B cell (primary cell): ENCODE measurements at regions of chr1 and their contacts with region 1.

Region 1: DNA sequence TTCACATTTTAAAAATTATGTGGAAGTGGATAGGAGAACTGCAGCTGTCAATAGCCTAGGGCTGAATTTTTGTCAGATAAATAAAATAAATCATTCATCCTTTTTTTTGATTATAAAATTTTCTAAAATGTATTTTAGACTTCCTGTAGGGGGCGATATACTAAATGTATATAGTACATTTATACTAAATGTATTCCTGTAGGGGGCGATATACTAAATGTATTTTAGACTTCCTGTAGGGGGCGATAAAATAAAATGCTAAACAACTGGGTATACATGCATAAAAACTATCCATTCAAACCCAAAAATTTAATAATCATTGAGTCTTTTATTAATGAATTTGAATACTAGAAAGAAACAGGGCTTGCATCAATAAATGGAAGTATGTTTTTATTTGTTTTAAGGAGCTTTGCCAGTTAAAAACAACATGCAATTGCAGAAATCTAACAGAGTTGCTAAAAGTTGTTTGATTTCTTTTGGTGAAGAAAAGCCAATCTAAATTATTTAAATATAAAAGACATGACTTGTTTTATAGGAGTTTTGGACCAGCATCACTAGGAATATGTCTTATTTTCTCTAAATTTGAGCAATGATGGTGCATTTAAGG is 31.4 kb downstream of the CLCA1 start:
- DNase-seq: peak; percentile 58
- ATAC-seq: peak; percentile 82
- H3K4me3 ChIP-seq: no peak overlapping the region
- H3K4me3 Mint-ChIP-seq: no peak overlapping the region
- H3K27ac ChIP-seq: no peak overlapping the region
- H3K27ac Mint-ChIP-seq: no peak overlapping the region
- H3K4me1 ChIP-seq: peaks cover 0 to 21% of the 10 kb centered on the region in 2 donors
- H3K4me1 Mint-ChIP-seq: peaks cover 8% of the 10 kb centered on the region
- H3K27me3 ChIP-seq: peaks cover 0 to 11% (median 4%) of the 10 kb centered on the region in 4 experiments
- H3K27me3 Mint-ChIP-seq: peaks cover 36% of the 10 kb centered on the region
- CTCF ChIP-seq: peak; percentile 100

Region 2: GRCh38 chr1:86289161-86289560 is 210.9 kb before region 1 on chr1:
- CTCF ChIA-PET with region 1: no interaction called
- POLR2A ChIA-PET with region 1: no interaction called
- intact Hi-C with region 1: no loop called
- DNase-seq: no peak
- ATAC-seq: no peak
- H3K4me3 ChIP-seq: no peak overlapping the region
- H3K4me3 Mint-ChIP-seq: no peak overlapping the region
- H3K27ac ChIP-seq: no peak overlapping the region
- H3K27ac Mint-ChIP-seq: no peak overlapping the region
- H3K4me1 ChIP-seq: no peaks in the 10 kb centered on the region
- H3K4me1 Mint-ChIP-seq: no peaks in the 10 kb centered on the region
- H3K27me3 ChIP-seq: no peaks in the 10 kb centered on the region
- H3K27me3 Mint-ChIP-seq: no peaks in the 10 kb centered on the region
- CTCF ChIP-seq: no peak

Region 3: DNA sequence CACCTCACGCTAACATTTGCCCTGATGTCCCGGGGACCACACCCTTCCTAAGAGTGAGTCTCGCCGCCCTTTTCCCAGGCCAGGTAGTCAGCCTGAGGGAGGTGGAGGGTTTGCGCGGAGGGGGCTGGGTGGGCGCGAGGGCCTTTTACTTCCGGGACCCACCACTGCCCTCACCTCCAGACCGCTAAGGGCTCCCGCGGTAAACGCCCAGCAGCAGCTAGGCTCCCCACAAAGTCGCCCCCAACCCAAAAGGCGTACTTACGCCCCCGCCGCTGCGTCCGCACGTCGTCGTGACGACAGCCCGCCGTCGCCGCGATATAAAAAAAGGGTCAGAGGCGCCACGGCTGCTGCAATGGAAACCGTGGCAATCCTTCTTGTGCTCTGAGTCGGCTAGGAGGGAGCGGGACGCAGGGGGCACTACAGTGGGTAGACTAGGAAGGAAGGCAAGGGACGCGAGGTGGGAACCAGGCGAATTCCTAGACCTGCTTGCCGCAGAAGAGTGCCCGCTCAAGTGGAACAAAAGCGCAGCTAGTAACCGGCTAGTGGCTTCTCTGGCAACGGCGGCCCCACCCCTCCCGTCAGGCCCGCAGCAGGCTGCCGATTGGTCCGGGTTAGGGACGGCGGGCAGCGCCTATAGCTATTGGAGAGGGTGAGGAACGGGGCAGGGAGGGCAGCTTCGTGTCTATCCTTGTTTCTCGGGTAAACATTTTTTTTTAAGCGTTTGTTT is 104.2 kb before region 1 on chr1 and contains the start of gene ODF2L:
- CTCF ChIA-PET with region 1: interaction called, 12 read pairs
- POLR2A ChIA-PET with region 1: no interaction called
- intact Hi-C with region 1: no loop called
- DNase-seq: peak; percentile 90
- ATAC-seq: peak; percentile 99
- H3K4me3 ChIP-seq: peak within 1 kb of the TSS; percentile 83 to 98 (median 87)
- H3K4me3 Mint-ChIP-seq: peak within 1 kb of the TSS; percentile 99
- H3K27ac ChIP-seq: peak within 1 kb of the TSS; percentile 82 to 90
- H3K27ac Mint-ChIP-seq: peak within 1 kb of the TSS; percentile 97
- H3K4me1 ChIP-seq: peaks cover 12 to 15% of the 10 kb centered on the region in 2 donors
- H3K4me1 Mint-ChIP-seq: peaks cover 36% of the 10 kb centered on the region
- H3K27me3 ChIP-seq: no peaks in the 10 kb centered on the region
- H3K27me3 Mint-ChIP-seq: no peaks in the 10 kb centered on the region
- CTCF ChIP-seq: no peak
- total RNA-seq, gene ODF2L: 61.3 and 65.9 TPM in 2 replicates

Region 4: DNA sequence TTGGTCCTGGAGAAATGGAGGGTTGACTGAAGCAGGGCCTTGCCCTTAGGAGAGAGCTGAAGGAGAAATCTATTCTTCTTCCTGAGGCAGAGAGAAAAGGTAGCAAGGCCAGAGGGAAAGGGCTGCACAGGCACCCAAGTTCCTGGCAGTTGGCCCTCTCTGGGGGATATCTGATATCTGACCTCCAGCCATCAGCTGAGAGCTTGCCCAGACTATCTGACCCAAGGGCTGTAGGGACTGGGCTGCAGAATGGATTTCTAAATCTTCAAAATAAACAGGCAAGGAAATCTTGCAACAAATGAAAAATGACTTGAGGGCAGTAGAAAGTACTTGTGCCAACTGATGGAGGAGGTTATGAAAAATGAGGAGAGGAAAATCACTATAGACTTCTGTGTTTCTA is 76.6 kb before region 1 on chr1:
- CTCF ChIA-PET with region 1: no interaction called
- POLR2A ChIA-PET with region 1: no interaction called
- intact Hi-C with region 1: no loop called
- DNase-seq: no peak
- ATAC-seq: no peak
- H3K4me3 ChIP-seq: no peak overlapping the region
- H3K4me3 Mint-ChIP-seq: no peak overlapping the region
- H3K27ac ChIP-seq: no peak overlapping the region
- H3K27ac Mint-ChIP-seq: no peak overlapping the region
- H3K4me1 ChIP-seq: peaks cover 0 to 3% of the 10 kb centered on the region in 2 donors
- H3K4me1 Mint-ChIP-seq: peaks cover 4% of the 10 kb centered on the region
- H3K27me3 ChIP-seq: no peaks in the 10 kb centered on the region
- H3K27me3 Mint-ChIP-seq: peaks cover 15% of the 10 kb centered on the region
- CTCF ChIP-seq: no peak

Region 5: DNA sequence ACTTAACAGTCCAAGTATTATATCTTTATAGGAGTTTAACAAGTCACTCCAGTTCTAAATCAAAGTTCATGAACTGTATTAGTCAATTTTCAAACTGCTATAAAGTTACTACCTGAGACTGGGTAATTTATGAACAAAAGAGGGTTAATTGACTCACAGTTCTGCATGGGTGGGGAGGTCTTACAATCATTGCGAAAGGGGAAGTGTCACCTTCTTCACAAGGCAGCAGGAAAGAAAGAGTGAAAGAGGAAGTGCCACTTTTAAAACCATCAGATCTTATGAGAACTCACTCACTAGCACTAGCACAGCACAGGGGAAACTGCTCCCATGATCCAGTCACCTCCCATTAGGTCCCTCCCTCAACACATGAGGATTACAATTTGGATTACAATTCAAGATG is 116.8 kb after region 1 on chr1:
- CTCF ChIA-PET with region 1: interaction called, 5 read pairs
- POLR2A ChIA-PET with region 1: no interaction called
- intact Hi-C with region 1: loop called (anchors 2 kb)
- DNase-seq: peak; percentile 88
- ATAC-seq: peak; percentile 99
- H3K4me3 ChIP-seq: peak overlapping the region in 1 of 5 experiments; percentile 31
- H3K4me3 Mint-ChIP-seq: peak overlapping the region; percentile 27
- H3K27ac ChIP-seq: peak overlapping the region; percentile 65 to 77
- H3K27ac Mint-ChIP-seq: peak overlapping the region; percentile 70
- H3K4me1 ChIP-seq: peaks cover 22 to 23% of the 10 kb centered on the region in 2 donors
- H3K4me1 Mint-ChIP-seq: peaks cover 42% of the 10 kb centered on the region
- H3K27me3 ChIP-seq: no peaks in the 10 kb centered on the region
- H3K27me3 Mint-ChIP-seq: no peaks in the 10 kb centered on the region
- CTCF ChIP-seq: no peak

Region 6: DNA sequence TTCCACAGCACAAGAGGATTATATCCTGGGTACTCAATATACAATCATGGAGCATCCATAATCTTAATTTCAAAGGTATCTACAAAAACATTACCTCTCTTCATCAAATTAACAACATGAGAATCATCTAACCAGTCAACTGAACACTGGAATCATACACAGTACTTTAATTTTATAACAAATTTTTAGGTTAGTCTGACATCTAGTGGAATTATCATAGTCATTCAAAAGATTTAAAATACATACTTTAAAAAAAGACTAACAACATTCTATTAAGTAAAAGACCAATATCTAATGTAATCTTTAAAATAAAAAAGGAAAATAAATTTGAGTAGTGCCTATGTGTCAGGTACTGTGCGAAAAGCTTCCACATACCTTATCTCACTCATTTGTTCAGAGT is 187.5 kb after region 1 on chr1:
- CTCF ChIA-PET with region 1: interaction called, 33 read pairs
- POLR2A ChIA-PET with region 1: no interaction called
- intact Hi-C with region 1: no loop called
- DNase-seq: peak; percentile 41
- ATAC-seq: peak; percentile 51
- H3K4me3 ChIP-seq: no peak overlapping the region
- H3K4me3 Mint-ChIP-seq: no peak overlapping the region
- H3K27ac ChIP-seq: no peak overlapping the region
- H3K27ac Mint-ChIP-seq: no peak overlapping the region
- H3K4me1 ChIP-seq: no peaks in the 10 kb centered on the region
- H3K4me1 Mint-ChIP-seq: no peaks in the 10 kb centered on the region
- H3K27me3 ChIP-seq: no peaks in the 10 kb centered on the region
- H3K27me3 Mint-ChIP-seq: no peaks in the 10 kb centered on the region
- CTCF ChIP-seq: peak; percentile 71

Region 7: GRCh38 chr1:86833461-86834215 is 333.5 kb after region 1 on chr1:
- CTCF ChIA-PET with region 1: no interaction called
- POLR2A ChIA-PET with region 1: no interaction called
- intact Hi-C with region 1: loop called (anchors 5 kb)
- DNase-seq: peak; percentile 81
- ATAC-seq: peak; percentile 70
- H3K4me3 ChIP-seq: no peak overlapping the region
- H3K4me3 Mint-ChIP-seq: no peak overlapping the region
- H3K27ac ChIP-seq: no peak overlapping the region
- H3K27ac Mint-ChIP-seq: no peak overlapping the region
- H3K4me1 ChIP-seq: peaks cover 0 to 5% of the 10 kb centered on the region in 2 donors
- H3K4me1 Mint-ChIP-seq: peaks cover 5% of the 10 kb centered on the region
- H3K27me3 ChIP-seq: no peaks in the 10 kb centered on the region
- H3K27me3 Mint-ChIP-seq: no peaks in the 10 kb centered on the region
- CTCF ChIP-seq: peak; percentile 76

Region 8: DNA sequence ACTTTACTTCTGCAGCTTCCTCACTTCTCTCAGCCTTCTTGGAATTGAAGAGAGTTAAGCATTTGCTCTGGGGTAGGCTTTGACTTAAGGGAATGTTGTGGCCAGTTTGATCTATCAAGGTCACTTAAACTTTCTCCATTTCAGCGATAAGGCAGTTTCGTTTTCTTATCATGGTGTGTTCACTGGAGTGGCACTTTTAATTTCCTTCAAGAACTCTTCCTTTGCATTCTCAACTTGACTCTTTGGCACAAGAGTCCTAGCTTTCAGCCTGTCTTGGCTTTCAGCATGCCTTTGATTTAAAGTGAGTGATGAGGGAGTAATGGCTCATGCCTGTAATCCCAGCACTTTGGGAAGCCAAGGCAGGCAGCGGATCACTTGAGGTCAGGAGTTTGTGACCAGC is 453.1 kb after region 1 on chr1:
- CTCF ChIA-PET with region 1: no interaction called
- POLR2A ChIA-PET with region 1: no interaction called
- intact Hi-C with region 1: no loop called
- DNase-seq: no peak
- ATAC-seq: no peak
- H3K4me3 ChIP-seq: peak overlapping the region in 1 of 5 experiments; percentile 2
- H3K4me3 Mint-ChIP-seq: peak overlapping the region; percentile 78
- H3K27ac ChIP-seq: no peak overlapping the region
- H3K27ac Mint-ChIP-seq: no peak overlapping the region
- H3K4me1 ChIP-seq: peaks cover 5 to 6% of the 10 kb centered on the region in 2 donors
- H3K4me1 Mint-ChIP-seq: peaks cover 33% of the 10 kb centered on the region
- H3K27me3 ChIP-seq: no peaks in the 10 kb centered on the region
- H3K27me3 Mint-ChIP-seq: no peaks in the 10 kb centered on the region
- CTCF ChIP-seq: no peak

Region 9: GRCh38 chr1:87888446-87888845 is 1388.4 kb after region 1 on chr1:
- CTCF ChIA-PET with region 1: no interaction called
- POLR2A ChIA-PET with region 1: no interaction called
- intact Hi-C with region 1: no loop called
- DNase-seq: no peak
- ATAC-seq: no peak
- H3K4me3 ChIP-seq: no peak overlapping the region
- H3K4me3 Mint-ChIP-seq: no peak overlapping the region
- H3K27ac ChIP-seq: no peak overlapping the region
- H3K27ac Mint-ChIP-seq: no peak overlapping the region
- H3K4me1 ChIP-seq: peaks cover 5 to 6% of the 10 kb centered on the region in 2 donors
- H3K4me1 Mint-ChIP-seq: peaks cover 15% of the 10 kb centered on the region
- H3K27me3 ChIP-seq: no peaks in the 10 kb centered on the region
- H3K27me3 Mint-ChIP-seq: no peaks in the 10 kb centered on the region
- CTCF ChIP-seq: no peak